SK-MEL-5 (cell line): ENCODE measurements at regions of chr12 and their contacts with region 1.

Region 1: GRCh38 chr12:1117970-1118563 is 127.0 kb downstream of the ERC1 start:
- DNase-seq: peak; percentile 72

Region 2: DNA sequence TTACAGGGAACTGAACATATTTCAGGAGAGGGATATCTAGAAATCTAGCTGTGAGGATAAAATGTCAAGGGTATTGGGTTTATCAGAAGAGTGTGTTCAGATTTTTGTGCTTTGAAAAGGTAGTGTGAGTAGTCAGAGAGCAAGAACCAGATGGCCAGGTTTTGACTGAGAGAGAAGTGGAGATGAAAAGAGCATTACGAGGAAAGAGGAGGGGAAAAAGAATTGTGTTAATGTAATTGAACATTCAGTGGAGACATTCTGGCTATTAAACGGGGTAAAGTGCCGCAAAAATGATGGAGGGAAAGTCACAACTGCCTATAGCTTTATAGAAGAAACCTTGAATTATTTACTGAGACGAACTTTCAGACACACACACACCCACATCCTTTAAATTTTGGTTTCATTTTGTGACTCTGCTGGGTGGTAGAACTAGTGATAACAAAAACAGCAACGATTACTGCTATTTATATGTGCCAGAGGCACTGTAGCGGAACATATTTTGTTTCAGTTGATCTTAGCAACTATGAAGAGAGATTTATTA is 86.6 kb after region 1 on chr12:
- in situ Hi-C with region 1: loop called (anchors 25 kb)
- DNase-seq: peak; percentile 13

Region 3: GRCh38 chr12:1282670-1283335 is 164.7 kb after region 1 on chr12:
- in situ Hi-C with region 1: no loop called
- DNase-seq: no peak

Region 4: DNA sequence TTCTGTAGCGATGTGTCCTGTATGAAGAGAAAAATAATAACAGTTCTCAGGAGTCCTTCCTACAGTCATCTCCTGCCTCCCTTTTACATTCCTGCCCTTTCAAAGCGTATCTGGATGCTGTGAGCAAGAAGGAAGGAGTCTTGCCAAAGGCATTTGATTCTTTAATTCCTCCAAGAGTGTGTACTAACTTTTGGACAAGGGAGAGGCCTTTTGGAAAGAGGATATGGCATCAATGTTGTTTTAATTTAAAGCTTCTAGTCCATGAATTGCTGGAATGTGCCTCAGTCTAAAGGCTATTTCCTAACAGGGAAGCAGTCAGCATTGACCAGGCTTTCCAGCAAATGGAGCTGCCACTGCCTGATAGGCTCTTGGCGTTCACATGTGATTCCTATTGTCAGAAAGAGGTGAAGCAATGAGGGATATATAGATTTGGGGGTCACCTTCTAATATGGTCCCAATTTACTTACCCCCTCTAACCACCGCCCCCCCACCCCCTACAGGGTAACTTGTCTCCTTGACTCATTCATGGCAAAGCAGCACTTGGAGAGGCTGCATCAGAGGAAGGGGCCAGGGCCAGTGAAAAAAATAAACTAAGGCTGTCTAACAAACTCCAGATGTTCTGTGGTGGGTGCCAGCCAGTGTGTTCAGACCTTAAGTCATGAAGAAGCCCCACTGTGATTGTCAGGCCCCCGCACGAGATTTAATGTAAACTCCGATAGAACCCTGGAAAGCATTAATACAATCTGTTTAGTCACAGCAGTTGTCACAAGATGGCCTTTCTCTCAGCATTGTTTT is 256.0 kb after region 1 on chr12:
- in situ Hi-C with region 1: no loop called
- DNase-seq: no peak

Region 5: DNA sequence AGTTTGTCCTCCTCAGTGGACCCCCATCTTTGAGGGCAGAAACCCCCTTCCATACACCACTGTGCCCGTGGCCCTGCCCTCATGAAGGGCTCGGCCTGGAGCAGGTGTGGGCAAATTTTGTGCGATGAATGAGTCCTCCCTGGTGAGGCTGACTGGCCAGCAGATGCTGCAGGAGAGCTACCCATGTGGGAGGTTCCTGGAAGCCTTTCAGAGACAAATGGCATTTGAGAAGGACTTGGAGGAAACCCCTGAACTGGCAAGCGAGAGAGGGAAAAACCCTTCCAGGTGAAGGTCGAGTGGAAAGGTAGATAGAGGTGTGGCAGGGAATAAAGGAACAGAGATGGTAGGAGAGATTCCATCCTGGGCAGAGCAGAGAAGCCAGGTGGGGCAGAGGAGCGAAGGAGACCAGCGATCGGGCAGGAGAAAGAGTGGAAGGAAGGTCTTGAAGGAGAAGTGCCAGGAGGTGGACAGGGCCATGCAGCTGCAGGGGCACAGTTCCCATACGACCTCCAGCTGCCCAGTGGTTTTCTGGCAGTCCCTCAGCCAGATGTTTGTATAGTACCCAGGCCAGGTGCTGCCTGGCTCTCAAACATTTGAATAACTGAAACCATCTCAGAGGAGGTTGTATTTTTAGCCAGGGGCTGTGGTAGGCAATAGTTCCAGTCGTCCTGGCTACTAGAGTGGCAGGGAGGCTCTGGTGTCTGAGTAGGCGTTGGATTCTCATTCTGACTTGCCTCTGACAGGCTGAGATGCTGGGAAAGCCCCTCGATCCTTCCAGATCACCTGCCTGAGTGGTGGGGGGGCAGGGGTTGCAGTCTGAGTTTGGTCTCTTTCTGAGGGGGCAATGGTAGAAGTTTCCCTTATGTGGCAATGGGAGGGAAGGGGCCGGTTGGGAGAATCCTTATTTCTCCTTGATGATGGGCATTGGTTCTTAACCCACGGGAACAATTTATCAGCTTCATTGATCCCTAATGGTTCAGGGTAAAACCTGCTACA is 436.2 kb after region 1 on chr12:
- in situ Hi-C with region 1: loop called (anchors 25 kb)
- DNase-seq: no peak